ENCODE measurements at regions of chr16 and their contacts with region 1.

Region 1: GRCh38 chr16:714558-715476 is at the start of gene METRN:
- DNase-seq: peak; percentile 94
- ATAC-seq: peak; percentile 87
- H3K4me3 Mint-ChIP-seq: peak within 1 kb of the TSS; percentile 80
- H3K27ac Mint-ChIP-seq: no peak within 1 kb of the TSS
- H3K4me1 Mint-ChIP-seq: peaks cover 21% of the 10 kb centered on the region
- H3K27me3 Mint-ChIP-seq: peaks cover 12% of the 10 kb centered on the region
- CTCF ChIP-seq: no peak
- total RNA-seq, gene METRN: 37.2 to 43.1 TPM

Region 2: DNA sequence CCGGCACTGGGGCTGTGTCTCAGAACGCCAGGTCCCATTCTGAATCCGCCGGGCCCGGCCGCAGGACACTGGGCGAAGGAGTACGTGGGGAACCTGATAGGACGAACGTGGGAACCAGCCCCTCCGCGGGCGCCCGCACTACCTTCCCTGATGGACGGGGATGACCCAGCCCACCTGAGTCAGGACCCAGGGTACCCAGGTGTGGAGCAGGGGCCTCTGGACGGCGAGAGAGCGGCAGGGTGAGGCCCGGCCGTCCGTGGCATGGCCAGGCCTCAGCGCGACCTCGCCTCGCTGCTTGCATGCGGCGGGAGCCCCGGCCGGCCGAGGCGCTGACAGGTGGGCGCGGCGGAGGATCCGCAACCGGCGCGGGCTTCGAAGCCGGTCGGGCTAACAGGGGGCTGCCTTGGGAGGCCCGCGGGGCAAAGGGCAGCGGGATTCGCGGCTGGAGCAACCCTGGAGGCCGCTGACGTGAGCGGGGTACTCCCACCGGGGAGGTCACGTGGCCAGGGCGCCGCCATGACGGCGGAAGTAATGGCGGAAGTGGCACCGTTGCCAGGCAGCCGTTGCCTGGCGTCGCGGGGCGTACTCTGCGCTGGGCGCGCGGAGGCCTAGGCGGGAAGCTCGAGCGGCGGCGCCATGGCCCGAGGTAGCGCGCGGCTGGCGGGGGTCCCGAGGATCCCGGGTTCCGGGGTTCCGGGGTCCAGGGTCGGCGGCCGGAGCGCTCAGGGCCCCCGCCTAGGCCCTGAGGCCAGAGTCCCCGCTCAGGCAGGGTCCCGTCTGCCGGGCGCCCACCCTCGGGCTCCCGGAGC is 65.8 kb before region 1 on chr16 and contains the start of gene WDR90:
- CTCF ChIA-PET with region 1: no interaction called
- POLR2A ChIA-PET with region 1: no interaction called
- intact Hi-C with region 1: no loop called
- DNase-seq: peak; percentile 95
- ATAC-seq: peak; percentile 85
- H3K4me3 Mint-ChIP-seq: peak within 1 kb of the TSS; percentile 86
- H3K27ac Mint-ChIP-seq: peak within 1 kb of the TSS; percentile 79
- H3K4me1 Mint-ChIP-seq: peaks cover 18% of the 10 kb centered on the region
- H3K27me3 Mint-ChIP-seq: no peaks in the 10 kb centered on the region
- CTCF ChIP-seq: no peak
- total RNA-seq, gene WDR90: 89.6 to 90.7 TPM

Region 3: GRCh38 chr16:695355-696089 is 19.3 kb before region 1 on chr16:
- CTCF ChIA-PET with region 1: interaction called, 4 read pairs
- POLR2A ChIA-PET with region 1: interaction called, 11 read pairs
- intact Hi-C with region 1: no loop called
- DNase-seq: peak; percentile 79
- ATAC-seq: peak; percentile 82
- H3K4me3 Mint-ChIP-seq: peak overlapping the region; percentile 78
- H3K27ac Mint-ChIP-seq: peak overlapping the region; percentile 75
- H3K4me1 Mint-ChIP-seq: peaks cover 20% of the 10 kb centered on the region
- H3K27me3 Mint-ChIP-seq: peaks cover 4% of the 10 kb centered on the region
- CTCF ChIP-seq: no peak

Region 4: GRCh38 chr16:704552-705380 is 10.1 kb before region 1 on chr16:
- CTCF ChIA-PET with region 1: interaction called, 207 read pairs
- POLR2A ChIA-PET with region 1: interaction called, 6 read pairs
- intact Hi-C with region 1: no loop called
- DNase-seq: no peak
- ATAC-seq: no peak
- H3K4me3 Mint-ChIP-seq: no peak overlapping the region
- H3K27ac Mint-ChIP-seq: no peak overlapping the region
- H3K4me1 Mint-ChIP-seq: peaks cover 2% of the 10 kb centered on the region
- H3K27me3 Mint-ChIP-seq: peaks cover 58% of the 10 kb centered on the region
- CTCF ChIP-seq: no peak

Region 5: GRCh38 chr16:728131-728889 is 13.5 kb after region 1 on chr16:
- CTCF ChIA-PET with region 1: interaction called, 207 read pairs
- POLR2A ChIA-PET with region 1: interaction called, 37 read pairs
- intact Hi-C with region 1: no loop called
- DNase-seq: peak; percentile 72
- ATAC-seq: peak; percentile 58
- H3K4me3 Mint-ChIP-seq: peak overlapping the region; percentile 62
- H3K27ac Mint-ChIP-seq: no peak overlapping the region
- H3K4me1 Mint-ChIP-seq: peaks cover 3% of the 10 kb centered on the region
- H3K27me3 Mint-ChIP-seq: no peaks in the 10 kb centered on the region
- CTCF ChIP-seq: no peak

Region 6: GRCh38 chr16:740764-741505 is 26.1 kb after region 1 on chr16 and contains the start of gene CIAO3:
- CTCF ChIA-PET with region 1: interaction called, 207 read pairs
- POLR2A ChIA-PET with region 1: interaction called, 84 read pairs
- intact Hi-C with region 1: no loop called
- DNase-seq: peak; percentile 92
- ATAC-seq: peak; percentile 85
- H3K4me3 Mint-ChIP-seq: peak within 1 kb of the TSS; percentile 80
- H3K27ac Mint-ChIP-seq: peak within 1 kb of the TSS; percentile 63
- H3K4me1 Mint-ChIP-seq: peaks cover 20% of the 10 kb centered on the region
- H3K27me3 Mint-ChIP-seq: no peaks in the 10 kb centered on the region
- CTCF ChIP-seq: peak; percentile 88
- total RNA-seq, gene CIAO3: 21.3 to 25.0 TPM

Region 7: DNA sequence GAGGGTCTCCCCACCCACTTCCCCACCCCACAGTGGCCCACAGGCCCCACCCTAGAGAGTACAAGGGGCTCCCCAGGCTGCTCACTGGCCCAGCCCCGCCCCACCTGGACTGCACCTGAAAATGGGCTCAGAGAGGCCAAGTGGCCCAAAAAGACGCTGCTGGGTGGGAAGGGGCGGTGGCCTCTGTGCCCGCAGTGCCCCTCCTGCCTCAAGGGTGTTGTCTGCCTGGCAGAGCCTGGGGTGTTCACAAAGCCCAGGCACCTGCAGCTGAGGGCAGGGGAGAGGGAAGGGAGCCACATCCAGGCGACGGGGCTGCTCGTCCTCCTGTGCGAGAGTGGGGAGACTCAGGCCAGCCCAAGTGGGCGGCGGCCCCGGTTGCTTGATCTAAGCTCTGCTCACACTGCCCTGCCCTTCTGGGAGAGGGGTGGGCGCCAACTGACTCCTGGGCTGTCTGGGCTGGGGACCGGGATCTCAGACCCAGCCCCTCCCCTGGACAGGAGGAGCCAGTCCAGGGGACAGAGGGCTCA is 47.2 kb after region 1 on chr16:
- CTCF ChIA-PET with region 1: no interaction called
- POLR2A ChIA-PET with region 1: no interaction called
- intact Hi-C with region 1: no loop called
- DNase-seq: no peak
- ATAC-seq: no peak
- H3K4me3 Mint-ChIP-seq: no peak overlapping the region
- H3K27ac Mint-ChIP-seq: no peak overlapping the region
- H3K4me1 Mint-ChIP-seq: no peaks in the 10 kb centered on the region
- H3K27me3 Mint-ChIP-seq: peaks cover 4% of the 10 kb centered on the region
- CTCF ChIP-seq: no peak

Region 8: GRCh38 chr16:788394-789126 is 73.7 kb after region 1 on chr16 and contains the start of gene CHTF18:
- CTCF ChIA-PET with region 1: interaction called, 149 read pairs
- POLR2A ChIA-PET with region 1: interaction called, 7 read pairs
- intact Hi-C with region 1: loop called (anchors 2 kb)
- DNase-seq: peak; percentile 92
- ATAC-seq: peak; percentile 97
- H3K4me3 Mint-ChIP-seq: peak within 1 kb of the TSS; percentile 87
- H3K27ac Mint-ChIP-seq: peak within 1 kb of the TSS; percentile 78
- H3K4me1 Mint-ChIP-seq: peaks cover 9% of the 10 kb centered on the region
- H3K27me3 Mint-ChIP-seq: no peaks in the 10 kb centered on the region
- CTCF ChIP-seq: no peak
- total RNA-seq, gene CHTF18: 95.6 to 115 TPM

Region 9: GRCh38 chr16:938136-938795 is 223.4 kb after region 1 on chr16:
- CTCF ChIA-PET with region 1: no interaction called
- POLR2A ChIA-PET with region 1: no interaction called
- intact Hi-C with region 1: no loop called
- DNase-seq: no peak
- ATAC-seq: no peak
- H3K4me3 Mint-ChIP-seq: no peak overlapping the region
- H3K27ac Mint-ChIP-seq: no peak overlapping the region
- H3K4me1 Mint-ChIP-seq: peaks cover 12% of the 10 kb centered on the region
- H3K27me3 Mint-ChIP-seq: no peaks in the 10 kb centered on the region
- CTCF ChIP-seq: no peak

Region 10: GRCh38 chr16:970766-971581 is 256.2 kb after region 1 on chr16 and contains the start of gene LMF1:
- CTCF ChIA-PET with region 1: no interaction called
- POLR2A ChIA-PET with region 1: no interaction called
- intact Hi-C with region 1: no loop called
- DNase-seq: peak; percentile 93
- ATAC-seq: peak; percentile 99
- H3K4me3 Mint-ChIP-seq: peak within 1 kb of the TSS; percentile 78
- H3K27ac Mint-ChIP-seq: peak within 1 kb of the TSS; percentile 74
- H3K4me1 Mint-ChIP-seq: peaks cover 11% of the 10 kb centered on the region
- H3K27me3 Mint-ChIP-seq: no peaks in the 10 kb centered on the region
- CTCF ChIP-seq: no peak
- total RNA-seq, gene LMF1: 8.7 to 9.7 TPM